ENCODE measurements at regions of chr11 and their contacts with region 1.

Region 1: GRCh38 chr11:59158206-59159068 is 13.5 kb upstream of the DTX4 start:
- DNase-seq: peak; percentile 65 to 73 (median 68)
- H3K4me3 ChIP-seq: no peak overlapping the region
- H3K4me3 Mint-ChIP-seq: no peak overlapping the region
- H3K27ac ChIP-seq: no peak overlapping the region
- H3K27ac Mint-ChIP-seq: peak overlapping the region in 3 of 7 donors; percentile 36 to 90 (median 66)
- H3K4me1 ChIP-seq: peaks cover 3% of the 10 kb centered on the region
- H3K4me1 Mint-ChIP-seq: peaks cover 2 to 8% (median 5%) of the 10 kb centered on the region in 4 donors
- H3K27me3 ChIP-seq: no peaks in the 10 kb centered on the region
- H3K27me3 Mint-ChIP-seq: peaks cover 10 to 14% of the 10 kb centered on the region in 2 donors

Region 2: DNA sequence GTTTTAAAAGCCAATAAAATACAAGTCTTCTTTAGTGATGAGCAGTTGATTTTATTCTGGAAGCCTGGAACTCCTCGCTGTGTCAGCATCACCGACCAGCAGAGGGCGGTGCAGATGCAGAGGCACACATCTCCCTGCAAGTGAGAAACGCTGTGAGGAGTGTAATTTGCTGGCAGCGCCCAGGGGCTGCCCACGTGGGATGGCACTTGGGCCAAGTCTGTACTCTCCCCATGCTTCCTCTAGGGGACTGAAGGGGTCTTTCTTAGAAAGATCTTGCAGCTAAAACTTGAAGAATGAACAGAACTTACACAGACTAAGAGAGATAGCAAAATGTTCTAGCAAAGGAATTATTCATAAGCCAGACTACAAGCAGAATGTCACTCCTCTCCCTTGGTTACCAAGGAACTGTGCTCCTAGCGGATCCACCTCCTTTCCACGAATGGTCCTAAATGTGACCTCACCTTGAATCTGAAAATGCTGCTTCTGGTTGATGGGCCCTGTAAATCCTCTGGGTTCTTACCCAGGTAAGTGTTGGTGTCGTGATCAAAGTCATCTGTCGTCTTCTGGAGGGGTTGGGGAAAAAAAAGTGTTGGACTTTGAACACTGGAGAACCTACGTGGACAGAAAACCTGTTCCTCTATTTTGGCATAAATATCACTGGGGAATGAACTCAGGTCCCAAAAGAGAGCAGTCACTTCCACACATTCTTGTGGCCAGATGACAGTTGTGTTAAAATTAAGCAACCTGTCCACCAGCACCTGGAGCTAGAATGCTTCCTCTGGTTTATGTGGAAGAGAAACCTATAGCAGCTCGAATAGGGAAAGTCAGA is 504.1 kb before region 1 on chr11:
- CTCF ChIA-PET with region 1: interaction called, 18 read pairs
- POLR2A ChIA-PET with region 1: no interaction called
- intact Hi-C with region 1: loop called (anchors 1 kb)
- DNase-seq: peak; percentile 63 to 72 (median 66)
- H3K4me3 ChIP-seq: no peak overlapping the region
- H3K4me3 Mint-ChIP-seq: no peak overlapping the region
- H3K27ac ChIP-seq: no peak overlapping the region
- H3K27ac Mint-ChIP-seq: peak overlapping the region in 1 of 7 donors; percentile 11
- H3K4me1 ChIP-seq: no peaks in the 10 kb centered on the region
- H3K4me1 Mint-ChIP-seq: peaks cover 0 to 2% (median under 1%) of the 10 kb centered on the region in 4 donors
- H3K27me3 ChIP-seq: no peaks in the 10 kb centered on the region
- H3K27me3 Mint-ChIP-seq: peaks cover 0 to 5% of the 10 kb centered on the region in 2 donors

Region 3: DNA sequence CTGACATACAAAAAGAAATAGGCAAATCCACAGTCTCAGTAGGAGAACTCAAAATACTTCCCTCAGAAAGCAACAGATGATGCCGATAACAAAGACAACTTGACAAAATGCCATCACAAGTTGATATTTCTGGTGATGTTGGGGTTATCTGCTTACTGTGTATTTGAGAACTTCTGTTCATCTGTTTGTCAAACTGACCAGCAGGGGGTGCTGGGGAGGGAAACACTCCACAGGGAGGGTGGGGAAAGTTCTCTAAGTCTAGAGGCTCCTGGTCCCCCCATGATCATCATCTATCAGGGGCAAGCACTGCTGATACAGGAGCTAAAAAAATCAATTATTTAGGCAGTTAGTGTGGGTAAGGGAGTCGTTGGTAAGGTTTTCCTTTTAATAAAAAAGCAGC is 199.9 kb before region 1 on chr11:
- CTCF ChIA-PET with region 1: interaction called, 3 read pairs
- POLR2A ChIA-PET with region 1: no interaction called
- intact Hi-C with region 1: loop called (anchors 1 kb)
- DNase-seq: peak in 3 of 5 donors; percentile 3 to 7 (median 5)
- H3K4me3 ChIP-seq: no peak overlapping the region
- H3K4me3 Mint-ChIP-seq: no peak overlapping the region
- H3K27ac ChIP-seq: no peak overlapping the region
- H3K27ac Mint-ChIP-seq: no peak overlapping the region
- H3K4me1 ChIP-seq: no peaks in the 10 kb centered on the region
- H3K4me1 Mint-ChIP-seq: no peaks in the 10 kb centered on the region
- H3K27me3 ChIP-seq: no peaks in the 10 kb centered on the region
- H3K27me3 Mint-ChIP-seq: peaks cover 7 to 13% of the 10 kb centered on the region in 2 donors

Region 4: DNA sequence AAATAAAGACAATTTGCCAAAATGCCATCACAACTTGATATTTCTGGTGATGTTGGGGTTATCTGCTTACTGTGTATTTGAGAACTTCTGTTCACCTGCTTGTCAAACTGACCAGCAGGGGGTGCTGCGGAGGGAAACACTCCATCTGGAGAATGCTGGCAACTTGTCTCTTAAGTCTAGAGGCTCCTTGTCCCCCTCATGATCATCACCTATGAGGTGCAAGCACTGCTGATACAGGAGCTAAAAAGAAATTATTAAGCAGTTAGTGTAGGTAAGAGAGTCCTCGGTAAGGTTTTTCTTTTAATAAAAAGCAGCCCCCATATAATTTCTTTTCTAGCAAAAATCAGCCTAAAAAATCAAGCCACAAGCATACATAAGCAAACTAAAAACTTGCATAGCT is 105.0 kb before region 1 on chr11:
- CTCF ChIA-PET with region 1: interaction called, 66 read pairs
- POLR2A ChIA-PET with region 1: interaction called, 3 read pairs
- intact Hi-C with region 1: loop called (anchors 1 kb)
- DNase-seq: peak; percentile 63 to 77 (median 71)
- H3K4me3 ChIP-seq: no peak overlapping the region
- H3K4me3 Mint-ChIP-seq: no peak overlapping the region
- H3K27ac ChIP-seq: no peak overlapping the region
- H3K27ac Mint-ChIP-seq: no peak overlapping the region
- H3K4me1 ChIP-seq: peaks cover 6% of the 10 kb centered on the region
- H3K4me1 Mint-ChIP-seq: peaks cover 4 to 7% (median 5%) of the 10 kb centered on the region in 4 donors
- H3K27me3 ChIP-seq: no peaks in the 10 kb centered on the region
- H3K27me3 Mint-ChIP-seq: peaks cover 14 to 25% of the 10 kb centered on the region in 2 donors

Region 5: DNA sequence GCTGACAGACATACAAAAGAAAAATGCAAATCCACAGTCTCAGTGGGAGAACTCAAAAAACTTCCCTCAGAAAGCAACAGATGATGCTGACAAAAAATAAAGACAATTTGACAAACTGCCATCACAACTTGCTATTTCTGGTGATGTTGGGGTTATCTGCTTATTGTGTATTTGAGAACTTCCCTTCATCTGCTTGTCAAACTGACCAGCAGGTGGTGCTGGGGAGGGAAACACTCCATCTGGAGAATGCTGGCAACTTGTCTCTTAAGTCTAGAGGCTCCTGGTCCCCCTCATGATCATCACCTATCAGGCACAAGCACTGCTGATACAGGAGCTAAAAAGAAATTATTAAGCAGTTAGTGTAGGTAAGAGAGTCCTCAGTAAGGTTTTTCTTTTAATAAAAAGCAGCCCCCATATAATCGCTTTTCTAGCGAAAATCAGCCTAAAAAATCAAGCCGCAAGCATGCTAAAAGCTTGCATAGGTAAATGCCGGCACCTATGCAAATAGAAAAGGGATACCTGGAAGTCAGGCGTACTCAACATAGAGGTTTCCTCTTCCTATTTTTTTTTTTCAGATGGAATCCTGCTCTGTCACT is 61.2 kb before region 1 on chr11:
- CTCF ChIA-PET with region 1: interaction called, 42 read pairs
- POLR2A ChIA-PET with region 1: interaction called, 3 read pairs
- intact Hi-C with region 1: loop called (anchors 1 kb)
- DNase-seq: peak; percentile 61 to 67 (median 63)
- H3K4me3 ChIP-seq: no peak overlapping the region
- H3K4me3 Mint-ChIP-seq: no peak overlapping the region
- H3K27ac ChIP-seq: no peak overlapping the region
- H3K27ac Mint-ChIP-seq: no peak overlapping the region
- H3K4me1 ChIP-seq: no peaks in the 10 kb centered on the region
- H3K4me1 Mint-ChIP-seq: peaks cover 2 to 10% (median 8%) of the 10 kb centered on the region in 4 donors
- H3K27me3 ChIP-seq: no peaks in the 10 kb centered on the region
- H3K27me3 Mint-ChIP-seq: peaks cover 8 to 15% of the 10 kb centered on the region in 2 donors

Region 6: DNA sequence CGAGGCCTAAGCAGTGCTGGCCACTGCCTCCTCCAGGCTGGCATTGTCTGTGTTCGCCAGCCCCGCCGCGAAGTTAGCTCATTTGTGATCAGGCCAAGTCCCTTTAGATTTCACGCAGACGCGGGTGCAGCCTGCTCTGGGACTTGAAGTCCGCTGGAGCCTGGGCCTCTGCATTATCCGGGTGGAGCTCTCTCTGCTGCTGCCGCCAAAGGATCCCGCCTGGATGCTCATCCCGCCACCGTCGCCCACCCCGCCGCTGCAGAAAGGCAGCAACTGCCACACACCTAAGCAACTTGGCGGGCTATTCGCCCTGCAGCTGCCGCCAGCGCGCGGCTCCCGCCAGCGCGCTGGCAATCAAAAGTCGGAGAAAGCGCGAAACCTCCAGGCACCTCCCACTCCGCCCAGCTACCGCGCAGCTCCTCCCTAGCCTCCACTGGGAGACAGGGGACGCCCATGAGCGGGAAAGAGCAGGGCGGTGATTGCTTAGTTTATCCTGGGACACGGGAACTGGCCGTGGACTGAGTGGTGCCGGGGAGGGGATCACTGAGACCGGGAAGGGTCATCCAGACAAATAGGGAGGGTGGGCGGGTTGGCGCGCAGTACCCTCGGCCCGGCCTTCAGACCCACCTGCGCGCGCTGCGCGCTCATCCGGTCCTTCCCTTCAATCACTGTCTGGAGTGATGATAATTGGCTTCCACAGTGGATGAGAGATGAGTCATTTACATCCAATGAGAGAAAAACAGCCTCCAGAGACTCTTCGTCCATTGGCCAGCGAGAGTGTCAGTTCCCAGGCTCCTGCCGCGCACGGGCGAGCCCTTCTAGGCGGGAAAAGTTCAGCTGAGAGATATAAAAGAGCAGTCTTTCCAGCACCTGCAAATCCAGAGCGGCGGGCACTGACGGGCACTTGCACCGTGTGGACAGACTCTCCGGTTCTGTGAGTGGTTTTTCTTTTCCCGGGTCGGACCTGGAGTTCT is 51.8 kb before region 1 on chr11 and contains the start of gene FAM111B:
- CTCF ChIA-PET with region 1: interaction called, 15 read pairs
- POLR2A ChIA-PET with region 1: no interaction called
- intact Hi-C with region 1: no loop called
- DNase-seq: peak; percentile 57 to 80 (median 62)
- H3K4me3 ChIP-seq: peak within 1 kb of the TSS; percentile 36 to 70
- H3K4me3 Mint-ChIP-seq: peak within 1 kb of the TSS; percentile 89 to 94 (median 92)
- H3K27ac ChIP-seq: peak within 1 kb of the TSS; percentile 30
- H3K27ac Mint-ChIP-seq: peak within 1 kb of the TSS; percentile 63 to 94 (median 86)
- H3K4me1 ChIP-seq: peaks cover 19% of the 10 kb centered on the region
- H3K4me1 Mint-ChIP-seq: peaks cover 27 to 41% (median 32%) of the 10 kb centered on the region in 4 donors
- H3K27me3 ChIP-seq: no peaks in the 10 kb centered on the region
- H3K27me3 Mint-ChIP-seq: no peaks in the 10 kb centered on the region
- total RNA-seq, gene FAM111B: 0.23 to 0.53 TPM

Region 7: DNA sequence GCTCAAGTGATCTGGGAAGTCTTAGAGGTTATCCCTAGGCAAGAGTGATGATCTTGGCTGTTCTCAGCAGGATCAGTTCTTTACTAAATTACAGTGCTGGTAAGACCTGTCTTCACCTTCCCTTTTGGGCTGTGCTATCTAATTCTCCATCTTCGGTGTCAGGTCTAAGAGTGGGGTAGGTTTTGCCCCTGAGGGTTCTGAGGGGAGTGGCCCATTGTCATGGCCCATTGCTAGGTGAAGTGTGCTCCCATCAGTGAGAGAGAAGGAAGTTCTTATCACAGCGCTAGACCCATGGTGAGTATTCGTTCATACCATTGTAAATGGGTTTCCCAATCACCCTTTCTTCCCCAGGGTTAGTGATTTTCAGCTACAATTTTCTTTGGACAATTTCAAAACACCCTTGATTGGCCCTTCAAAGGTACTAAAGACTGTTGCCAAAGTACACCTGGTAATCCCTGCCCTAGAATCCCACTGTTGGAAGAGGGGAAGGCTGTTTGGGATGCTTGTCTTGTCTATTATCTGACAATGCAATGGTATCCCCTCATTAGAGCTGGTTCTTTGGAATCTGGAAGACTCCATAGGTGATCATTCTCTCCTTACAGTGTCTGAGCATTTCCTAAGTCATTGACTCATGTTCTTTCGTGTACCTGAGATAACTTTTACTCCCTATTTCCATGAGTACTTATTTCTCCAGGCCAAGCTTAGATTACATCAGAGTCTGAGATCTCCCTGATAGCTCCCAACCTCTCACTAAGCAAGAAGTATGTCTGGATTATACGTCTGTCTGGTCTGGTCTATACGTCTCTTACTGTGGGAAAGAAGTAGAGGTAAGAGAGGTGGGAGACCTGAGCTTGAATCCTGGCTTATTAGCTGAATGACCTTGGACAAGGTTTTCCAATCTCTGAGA is 34.1 kb after region 1 on chr11:
- CTCF ChIA-PET with region 1: no interaction called
- POLR2A ChIA-PET with region 1: no interaction called
- intact Hi-C with region 1: no loop called
- DNase-seq: no peak
- H3K4me3 ChIP-seq: no peak overlapping the region
- H3K4me3 Mint-ChIP-seq: no peak overlapping the region
- H3K27ac ChIP-seq: no peak overlapping the region
- H3K27ac Mint-ChIP-seq: no peak overlapping the region
- H3K4me1 ChIP-seq: no peaks in the 10 kb centered on the region
- H3K4me1 Mint-ChIP-seq: peaks cover 0 to 4% (median 3%) of the 10 kb centered on the region in 4 donors
- H3K27me3 ChIP-seq: no peaks in the 10 kb centered on the region
- H3K27me3 Mint-ChIP-seq: peaks cover 0 to 2% of the 10 kb centered on the region in 2 donors

Region 8: DNA sequence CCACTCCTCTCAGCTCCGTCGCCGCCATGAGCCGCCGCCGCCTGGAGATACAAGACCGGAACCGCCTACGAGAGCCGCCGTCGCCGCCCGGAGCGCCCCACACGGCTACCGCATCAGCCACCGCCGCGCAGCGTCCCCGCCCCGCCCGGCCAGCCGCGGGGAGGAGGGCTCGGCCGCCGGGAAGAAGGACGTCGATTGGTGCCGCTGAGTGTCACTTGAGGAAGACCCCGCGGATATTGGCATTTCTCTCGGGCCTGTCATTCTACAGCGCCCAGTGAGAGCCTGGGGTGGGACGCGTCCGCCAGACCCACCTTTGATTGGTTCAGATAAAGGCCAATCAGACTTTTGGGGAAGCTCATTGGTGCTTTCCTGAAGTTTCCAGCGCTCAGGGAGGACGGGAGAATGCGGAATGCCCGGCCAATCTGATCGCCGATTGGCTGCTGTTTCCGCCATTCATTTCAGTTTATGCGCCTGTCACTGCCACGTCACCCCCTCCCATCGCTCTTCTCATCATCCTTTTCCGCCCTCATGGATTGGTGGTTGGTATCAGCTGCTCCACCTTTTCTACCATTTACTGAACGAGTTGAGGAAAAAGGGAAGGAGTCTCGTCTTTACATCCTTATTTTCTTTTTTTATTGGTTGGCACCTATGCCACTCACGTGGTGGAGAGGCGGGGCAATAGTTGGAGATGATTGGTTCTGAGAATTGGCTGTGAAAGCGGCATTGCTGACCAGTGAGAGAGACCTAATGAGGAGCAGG is 457.4 kb after region 1 on chr11 and contains the start of gene OSBP:
- CTCF ChIA-PET with region 1: no interaction called
- POLR2A ChIA-PET with region 1: no interaction called
- intact Hi-C with region 1: no loop called
- DNase-seq: peak; percentile 98 to 100 (median 100)
- H3K4me3 ChIP-seq: peak within 1 kb of the TSS; percentile 84 to 86
- H3K4me3 Mint-ChIP-seq: peak within 1 kb of the TSS; percentile 93 to 99 (median 96)
- H3K27ac ChIP-seq: peak within 1 kb of the TSS; percentile 95
- H3K27ac Mint-ChIP-seq: peak within 1 kb of the TSS; percentile 83 to 99 (median 98)
- H3K4me1 ChIP-seq: peaks cover 48% of the 10 kb centered on the region
- H3K4me1 Mint-ChIP-seq: peaks cover 29 to 53% (median 42%) of the 10 kb centered on the region in 4 donors
- H3K27me3 ChIP-seq: no peaks in the 10 kb centered on the region
- H3K27me3 Mint-ChIP-seq: no peaks in the 10 kb centered on the region
- total RNA-seq, gene OSBP: 55.3 to 55.6 TPM

Measured in CD4-positive, alpha-beta memory T cell (primary cell).